ENCODE measurements at regions of chr3 and their contacts with region 1.

Region 1: DNA sequence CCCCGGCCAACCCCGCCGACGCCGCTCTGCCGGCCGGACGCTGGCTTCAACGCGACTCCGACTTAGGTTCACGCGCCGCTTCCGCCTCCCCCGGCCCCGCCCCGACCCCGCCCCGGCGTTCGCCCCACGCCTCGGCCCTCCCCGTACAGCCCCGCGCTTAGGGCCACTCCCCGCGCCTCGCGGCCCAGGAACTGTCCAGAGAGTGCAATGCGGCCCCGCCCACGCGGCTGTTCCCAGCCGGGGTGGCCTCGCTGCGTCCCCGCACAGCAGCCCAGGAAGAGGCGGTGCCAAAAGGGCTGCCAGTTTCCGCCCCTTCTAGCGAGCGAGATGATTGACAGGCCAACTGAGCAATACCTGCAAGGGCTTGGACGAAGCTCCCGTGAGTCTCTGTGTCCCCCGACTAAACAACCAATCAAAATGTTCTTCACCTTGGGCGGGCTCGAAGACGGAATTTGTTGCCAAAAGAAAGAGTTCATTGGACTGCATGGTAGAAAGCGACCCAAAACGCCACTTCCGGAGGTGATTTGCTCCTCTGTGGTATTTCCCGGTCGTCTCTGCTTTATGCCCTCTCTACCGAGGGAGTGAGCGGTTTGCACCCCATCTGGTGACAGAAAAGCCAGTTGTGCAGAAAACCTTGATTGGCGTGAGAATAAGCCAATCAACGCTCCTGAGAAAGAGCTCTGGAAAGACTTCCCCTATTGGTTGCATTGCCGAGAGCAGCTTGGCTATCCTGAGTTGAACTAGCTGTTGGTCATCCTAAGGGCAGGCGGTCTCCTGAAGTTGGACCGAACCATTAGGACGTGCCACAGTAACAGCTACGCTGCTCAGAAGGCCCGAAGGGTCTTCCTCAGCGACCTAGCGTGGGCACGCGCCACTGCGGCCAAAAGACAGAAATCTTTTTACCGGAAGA is at the start of gene UBP1:
- DNase-seq: peak; percentile 98 to 99 (median 99)
- H3K4me3 ChIP-seq: peak within 1 kb of the TSS; percentile 93 to 97
- H3K4me3 Mint-ChIP-seq: peak within 1 kb of the TSS; percentile 95 to 100 (median 99)
- H3K27ac ChIP-seq: peak within 1 kb of the TSS; percentile 91
- H3K27ac Mint-ChIP-seq: peak within 1 kb of the TSS; percentile 98 to 100 (median 100)
- H3K4me1 ChIP-seq: peaks cover 46% of the 10 kb centered on the region
- H3K4me1 Mint-ChIP-seq: peaks cover 31 to 57% (median 49%) of the 10 kb centered on the region in 4 donors
- H3K27me3 ChIP-seq: no peaks in the 10 kb centered on the region
- H3K27me3 Mint-ChIP-seq: no peaks in the 10 kb centered on the region
- total RNA-seq, gene UBP1: 91.8 to 94.1 TPM

Region 2: GRCh38 chr3:32570421-32571191 is 870.0 kb before region 1 on chr3 and contains the start of gene DYNC1LI1:
- CTCF ChIA-PET with region 1: no interaction called
- POLR2A ChIA-PET with region 1: interaction called, 3 read pairs
- intact Hi-C with region 1: loop called (anchors 2 kb)
- DNase-seq: peak; percentile 89 to 90 (median 90)
- H3K4me3 ChIP-seq: peak within 1 kb of the TSS; percentile 90 to 93
- H3K4me3 Mint-ChIP-seq: peak within 1 kb of the TSS; percentile 91 to 97 (median 94)
- H3K27ac ChIP-seq: peak within 1 kb of the TSS; percentile 81
- H3K27ac Mint-ChIP-seq: peak within 1 kb of the TSS; percentile 56 to 97 (median 93)
- H3K4me1 ChIP-seq: peaks cover 32% of the 10 kb centered on the region
- H3K4me1 Mint-ChIP-seq: peaks cover 20 to 42% (median 28%) of the 10 kb centered on the region in 4 donors
- H3K27me3 ChIP-seq: no peaks in the 10 kb centered on the region
- H3K27me3 Mint-ChIP-seq: no peaks in the 10 kb centered on the region
- total RNA-seq, gene DYNC1LI1: 28.4 to 30.1 TPM

Region 3: GRCh38 chr3:33113772-33114621 is 326.6 kb before region 1 on chr3 and contains the start of gene CRTAP:
- CTCF ChIA-PET with region 1: interaction called, 3 read pairs
- POLR2A ChIA-PET with region 1: interaction called, 7 read pairs
- intact Hi-C with region 1: loop called (anchors 1 kb)
- DNase-seq: peak; percentile 85 to 88 (median 87)
- H3K4me3 ChIP-seq: peak within 1 kb of the TSS; percentile 71 to 83
- H3K4me3 Mint-ChIP-seq: peak within 1 kb of the TSS; percentile 83 to 92 (median 89)
- H3K27ac ChIP-seq: peak within 1 kb of the TSS; percentile 55
- H3K27ac Mint-ChIP-seq: peak within 1 kb of the TSS; percentile 75 to 94 (median 91)
- H3K4me1 ChIP-seq: peaks cover 42% of the 10 kb centered on the region
- H3K4me1 Mint-ChIP-seq: peaks cover 32 to 65% (median 48%) of the 10 kb centered on the region in 4 donors
- H3K27me3 ChIP-seq: no peaks in the 10 kb centered on the region
- H3K27me3 Mint-ChIP-seq: no peaks in the 10 kb centered on the region
- total RNA-seq, gene CRTAP: 75.4 to 84.4 TPM

Region 4: GRCh38 chr3:33717866-33718594 is 277.5 kb after region 1 on chr3 and contains the start of gene CLASP2:
- CTCF ChIA-PET with region 1: no interaction called
- POLR2A ChIA-PET with region 1: interaction called, 10 read pairs
- intact Hi-C with region 1: loop called (anchors 1 kb)
- DNase-seq: peak; percentile 86 to 89 (median 88)
- H3K4me3 ChIP-seq: peak within 1 kb of the TSS; percentile 53 to 88
- H3K4me3 Mint-ChIP-seq: peak within 1 kb of the TSS in 6 of 8 donors; percentile 92 to 99 (median 98)
- H3K27ac ChIP-seq: peak within 1 kb of the TSS; percentile 82
- H3K27ac Mint-ChIP-seq: peak within 1 kb of the TSS in 6 of 7 donors; percentile 96 to 99 (median 99)
- H3K4me1 ChIP-seq: peaks cover 27% of the 10 kb centered on the region
- H3K4me1 Mint-ChIP-seq: peaks cover 8 to 20% (median 13%) of the 10 kb centered on the region in 4 donors
- H3K27me3 ChIP-seq: no peaks in the 10 kb centered on the region
- H3K27me3 Mint-ChIP-seq: no peaks in the 10 kb centered on the region
- total RNA-seq, gene CLASP2: 62.1 to 63.0 TPM